KBM-7 (cell line): ENCODE measurements at regions of chr3 and their contacts with region 1.

Region 1: GRCh38 chr3:155382396-155383042 is 89.0 kb upstream of the STRIT1 start:
- DNase-seq: peak; percentile 84

Region 2: GRCh38 chr3:155185631-155186071 is 196.9 kb before region 1 on chr3:
- in situ Hi-C with region 1: no loop called
- DNase-seq: no peak

Region 3: GRCh38 chr3:155676252-155676981 is 293.9 kb after region 1 on chr3:
- in situ Hi-C with region 1: loop called (anchors 25 kb)
- DNase-seq: no peak

Region 4: GRCh38 chr3:155870133-155870944 is 487.8 kb after region 1 on chr3 and contains the start of gene GMPS:
- in situ Hi-C with region 1: loop called (anchors 25 kb)
- DNase-seq: peak; percentile 96